ENCODE measurements at regions of chr11 and their contacts with region 1.

Region 1: DNA sequence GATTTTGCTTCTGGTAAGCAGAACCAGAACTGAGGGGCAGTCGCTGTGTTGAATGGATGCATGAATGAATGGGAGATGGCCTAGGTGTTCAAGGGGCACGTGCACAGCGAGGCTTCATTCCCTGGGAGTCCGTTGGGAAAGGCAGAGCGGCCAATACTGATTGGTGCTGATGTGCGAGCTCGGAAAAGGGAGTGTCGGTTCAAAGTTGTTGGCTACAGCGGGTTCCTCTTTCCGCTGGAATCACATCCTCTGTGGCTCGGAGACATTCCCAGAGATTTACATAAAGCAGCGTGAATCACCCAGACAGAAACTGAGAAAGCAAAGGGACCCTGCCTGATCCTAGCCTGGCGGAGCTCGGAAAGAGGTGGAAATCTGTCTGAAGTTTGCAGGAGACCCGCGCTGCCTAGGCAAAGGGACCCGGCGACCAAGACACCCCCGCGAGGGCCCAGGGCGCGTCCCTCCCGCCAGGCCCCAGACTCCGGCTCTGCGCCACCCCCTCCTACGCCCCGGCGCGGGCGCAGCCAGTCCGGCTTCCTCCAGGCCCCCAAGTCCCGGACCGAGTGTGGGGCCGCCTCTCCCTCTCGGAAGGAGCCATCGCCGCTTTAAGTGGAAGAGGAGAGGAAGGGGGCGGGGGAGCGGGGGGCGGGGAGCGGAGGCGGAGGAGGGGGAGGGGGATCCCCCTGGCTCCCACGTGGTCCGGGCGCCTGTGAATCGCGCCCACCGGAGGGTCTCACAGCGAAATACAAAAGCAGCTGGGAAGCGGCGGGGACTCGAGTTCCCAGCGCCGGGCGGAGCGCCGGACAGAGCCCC is at the start of gene FJX1:
- DNase-seq: peak; percentile 75 to 79 (median 78)
- ATAC-seq: peak; percentile 77 to 86
- H3K4me3 ChIP-seq: peak within 1 kb of the TSS; percentile 79
- H3K27ac ChIP-seq: peak within 1 kb of the TSS; percentile 54
- H3K4me1 ChIP-seq: peaks cover 2% of the 10 kb centered on the region
- H3K27me3 ChIP-seq: no peaks in the 10 kb centered on the region
- total RNA-seq, gene FJX1: 0.91 to 5.9 (median 1.5) TPM

Region 2: DNA sequence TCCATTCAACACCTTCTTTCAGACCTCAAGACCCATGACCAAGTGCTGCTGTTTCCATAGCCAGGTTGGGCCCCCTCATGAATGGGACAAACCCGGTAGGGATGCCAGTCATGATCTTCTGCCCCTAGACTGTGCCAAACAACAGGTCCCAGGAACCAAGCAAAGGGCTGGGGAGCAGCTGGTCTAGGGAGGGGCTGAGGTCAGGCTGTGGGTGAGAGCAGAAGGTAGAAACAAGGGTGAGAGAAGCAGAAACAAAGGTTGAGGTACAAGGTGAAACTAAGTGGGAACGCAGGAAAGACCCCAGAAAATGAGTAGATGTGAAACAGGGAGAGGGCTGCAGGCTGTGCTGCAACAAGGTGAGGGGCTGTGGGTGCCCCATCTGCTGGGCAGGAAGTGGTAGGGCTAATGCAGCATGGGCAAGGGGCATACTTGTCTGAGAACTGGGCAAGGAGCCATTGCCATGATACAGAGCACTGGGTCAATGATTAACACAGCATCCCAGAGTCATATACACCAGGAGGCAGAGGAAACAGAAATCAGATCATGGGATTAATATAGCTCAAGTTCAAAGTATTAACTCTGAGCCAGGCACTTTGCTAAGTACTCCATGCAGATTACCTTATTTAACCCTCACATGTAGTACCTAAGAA is 244.5 kb before region 1 on chr11:
- intact Hi-C with region 1: no loop called
- DNase-seq: no peak
- ATAC-seq: peak in 1 of 2 donors; percentile 31
- H3K4me3 ChIP-seq: no peak overlapping the region
- H3K27ac ChIP-seq: no peak overlapping the region
- H3K4me1 ChIP-seq: peaks cover 2% of the 10 kb centered on the region
- H3K27me3 ChIP-seq: no peaks in the 10 kb centered on the region

Region 3: GRCh38 chr11:35662649-35663407 is 44.9 kb after region 1 on chr11 and contains the start of gene TRIM44:
- intact Hi-C with region 1: loop called in 1 of 4 experiments (anchors 5 kb)
- DNase-seq: peak; percentile 85 to 95 (median 94)
- ATAC-seq: peak; percentile 96 to 97
- H3K4me3 ChIP-seq: peak within 1 kb of the TSS; percentile 74
- H3K27ac ChIP-seq: peak within 1 kb of the TSS; percentile 90
- H3K4me1 ChIP-seq: peaks cover 6% of the 10 kb centered on the region
- H3K27me3 ChIP-seq: no peaks in the 10 kb centered on the region
- total RNA-seq, gene TRIM44: 38.7 to 54.2 (median 41.5) TPM

Region 4: GRCh38 chr11:35822815-35823495 is 205.1 kb after region 1 on chr11:
- intact Hi-C with region 1: loop called in 2 of 4 experiments (anchors 5 kb)
- DNase-seq: no peak
- ATAC-seq: no peak
- H3K4me3 ChIP-seq: no peak overlapping the region
- H3K27ac ChIP-seq: no peak overlapping the region
- H3K4me1 ChIP-seq: no peaks in the 10 kb centered on the region
- H3K27me3 ChIP-seq: no peaks in the 10 kb centered on the region

Region 5: DNA sequence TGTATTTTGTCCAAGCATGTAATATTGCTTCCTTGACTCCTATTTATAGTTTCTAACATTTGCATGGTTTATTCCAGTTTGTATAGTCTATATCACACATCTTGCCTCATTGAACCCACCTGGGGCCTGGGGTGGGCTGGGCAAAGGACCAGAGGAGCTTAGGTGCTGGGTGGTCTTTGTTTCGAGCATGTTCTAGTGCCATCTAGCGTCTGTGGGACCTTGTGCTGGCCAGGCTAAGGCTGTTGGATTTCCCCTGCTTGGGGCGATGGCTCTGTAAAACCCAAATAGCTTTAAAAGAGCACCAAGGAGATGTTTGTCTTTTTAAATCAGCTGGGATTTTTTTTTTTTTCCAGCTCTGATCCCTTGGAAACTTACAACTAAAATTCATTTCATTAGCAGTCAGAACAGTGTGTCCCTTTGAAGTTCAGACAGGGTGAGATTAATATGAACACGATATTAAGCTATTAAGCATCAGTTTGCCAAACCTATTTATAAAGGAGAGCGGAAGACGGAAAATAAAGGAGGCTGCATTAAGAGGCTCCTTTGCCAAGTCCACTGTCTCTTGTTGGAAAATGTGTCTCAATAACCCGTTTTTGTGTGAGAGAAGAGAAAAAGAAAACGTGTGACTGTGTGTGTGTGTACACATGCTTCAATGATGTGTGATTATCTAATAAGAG is 514.0 kb after region 1 on chr11:
- intact Hi-C with region 1: loop called (anchors 2 to 10 kb)
- DNase-seq: peak; percentile 51 to 79 (median 73)
- ATAC-seq: peak; percentile 90 to 93
- H3K4me3 ChIP-seq: no peak overlapping the region
- H3K27ac ChIP-seq: no peak overlapping the region
- H3K4me1 ChIP-seq: no peaks in the 10 kb centered on the region
- H3K27me3 ChIP-seq: no peaks in the 10 kb centered on the region

Region 6: DNA sequence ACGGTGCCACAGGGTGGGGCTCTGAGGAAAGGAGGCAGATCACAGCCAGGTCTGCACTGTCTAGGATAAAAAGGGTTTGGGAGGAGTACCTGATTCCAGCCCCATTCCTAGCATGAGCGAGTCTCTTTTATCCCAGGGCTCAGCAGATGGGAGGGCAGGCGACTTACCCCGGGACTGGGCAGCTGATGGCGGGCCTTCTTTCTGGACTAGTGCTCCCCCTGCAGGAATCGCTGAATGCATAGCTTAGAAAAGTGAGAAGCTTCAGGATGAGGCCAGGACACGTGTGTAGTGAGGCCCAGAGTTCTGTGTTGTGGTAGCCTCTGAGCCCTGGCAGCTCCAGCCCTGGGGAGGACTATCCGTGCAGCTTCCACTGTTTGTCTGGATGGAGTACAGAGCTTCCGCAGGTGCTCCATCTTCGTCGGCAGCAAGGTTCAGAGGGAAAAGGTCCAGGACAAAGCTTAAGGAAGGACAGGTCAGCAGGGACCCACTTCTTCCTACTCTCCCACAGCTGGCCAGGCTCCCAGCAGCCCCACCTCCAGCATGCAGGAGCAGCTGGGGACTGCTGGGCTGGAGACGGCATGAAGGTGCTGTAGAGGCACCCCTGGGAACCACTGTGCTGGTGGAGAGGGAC is 641.0 kb after region 1 on chr11:
- intact Hi-C with region 1: loop called in 2 of 4 experiments (anchors 2 to 10 kb)
- DNase-seq: peak; percentile 48 to 72 (median 53)
- ATAC-seq: peak; percentile 58 to 80
- H3K4me3 ChIP-seq: no peak overlapping the region
- H3K27ac ChIP-seq: no peak overlapping the region
- H3K4me1 ChIP-seq: no peaks in the 10 kb centered on the region
- H3K27me3 ChIP-seq: no peaks in the 10 kb centered on the region

Region 7: DNA sequence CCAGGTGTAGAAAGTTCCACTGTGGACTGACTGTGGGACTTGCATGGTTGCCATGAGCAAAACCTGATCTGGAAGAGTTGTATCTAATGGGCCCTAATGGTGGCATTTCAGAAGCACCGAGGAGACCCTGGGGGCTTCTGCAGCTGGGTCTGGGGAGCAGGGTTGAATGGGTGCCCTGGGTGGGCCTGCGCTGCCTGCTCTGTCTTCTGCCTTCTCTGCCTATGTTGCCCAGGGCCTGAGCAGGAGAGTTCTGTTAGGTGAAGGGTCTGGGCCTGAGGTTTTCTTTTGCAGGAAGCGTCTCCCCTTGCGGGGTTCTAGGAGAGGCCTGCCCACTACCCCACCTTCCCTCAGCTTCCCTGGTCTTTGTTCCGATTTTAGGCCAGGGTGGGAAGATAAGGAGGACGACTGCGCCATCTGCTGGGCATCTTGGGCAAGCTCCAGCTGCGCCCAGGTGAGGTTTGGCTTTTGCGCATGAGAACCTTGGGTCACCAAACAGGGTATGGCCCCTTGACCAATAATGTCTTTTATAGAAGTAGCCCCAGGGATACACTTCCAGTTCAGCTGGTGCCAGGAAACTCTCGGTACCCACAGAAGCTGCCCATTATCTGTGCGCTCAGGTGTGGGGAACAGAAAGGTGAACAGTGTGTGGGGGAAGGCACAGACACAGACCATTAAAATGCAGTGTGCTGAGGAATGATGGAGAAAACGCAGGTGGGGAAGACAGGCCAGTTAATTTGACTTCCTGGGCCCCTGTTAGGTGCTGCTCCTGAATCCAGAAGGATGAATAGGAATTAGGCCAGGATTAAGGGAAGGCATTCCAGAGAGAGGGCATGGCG is 648.1 kb after region 1 on chr11:
- intact Hi-C with region 1: loop called in 3 of 4 experiments (anchors 2 to 10 kb)
- DNase-seq: peak; percentile 34 to 72 (median 64)
- ATAC-seq: peak; percentile 66 to 82
- H3K4me3 ChIP-seq: no peak overlapping the region
- H3K27ac ChIP-seq: no peak overlapping the region
- H3K4me1 ChIP-seq: no peaks in the 10 kb centered on the region
- H3K27me3 ChIP-seq: no peaks in the 10 kb centered on the region

Measured in right cardiac atrium (tissue), 5 donors.